Endothelial cell of umbilical vein (primary cell): ENCODE measurements at regions of chr9 and their contacts with region 1.

Region 1: GRCh38 chr9:99266255-99267023 is 44.4 kb downstream of the SEC61B start:
- DNase-seq: peak; percentile 75
- H3K4me3 ChIP-seq: no peak overlapping the region
- H3K27ac ChIP-seq: no peak overlapping the region
- H3K4me1 ChIP-seq: peaks cover 20% of the 10 kb centered on the region
- H3K27me3 ChIP-seq: no peaks in the 10 kb centered on the region
- CTCF ChIP-seq: peak; percentile 89 to 91
- POLR2A ChIP-seq: no peak

Region 2: GRCh38 chr9:99162759-99163364 is 103.6 kb before region 1 on chr9:
- CTCF ChIA-PET with region 1: no interaction called
- POLR2A ChIA-PET with region 1: no interaction called
- dilution Hi-C with region 1: no loop called
- intact Hi-C with region 1: loop called (anchors 2 kb)
- DNase-seq: peak; percentile 62
- H3K4me3 ChIP-seq: no peak overlapping the region
- H3K27ac ChIP-seq: no peak overlapping the region
- H3K4me1 ChIP-seq: peaks cover 3% of the 10 kb centered on the region
- H3K27me3 ChIP-seq: peaks cover 2 to 7% of the 10 kb centered on the region in 2 experiments
- CTCF ChIP-seq: peak; percentile 43 to 44
- POLR2A ChIP-seq: no peak

Region 3: DNA sequence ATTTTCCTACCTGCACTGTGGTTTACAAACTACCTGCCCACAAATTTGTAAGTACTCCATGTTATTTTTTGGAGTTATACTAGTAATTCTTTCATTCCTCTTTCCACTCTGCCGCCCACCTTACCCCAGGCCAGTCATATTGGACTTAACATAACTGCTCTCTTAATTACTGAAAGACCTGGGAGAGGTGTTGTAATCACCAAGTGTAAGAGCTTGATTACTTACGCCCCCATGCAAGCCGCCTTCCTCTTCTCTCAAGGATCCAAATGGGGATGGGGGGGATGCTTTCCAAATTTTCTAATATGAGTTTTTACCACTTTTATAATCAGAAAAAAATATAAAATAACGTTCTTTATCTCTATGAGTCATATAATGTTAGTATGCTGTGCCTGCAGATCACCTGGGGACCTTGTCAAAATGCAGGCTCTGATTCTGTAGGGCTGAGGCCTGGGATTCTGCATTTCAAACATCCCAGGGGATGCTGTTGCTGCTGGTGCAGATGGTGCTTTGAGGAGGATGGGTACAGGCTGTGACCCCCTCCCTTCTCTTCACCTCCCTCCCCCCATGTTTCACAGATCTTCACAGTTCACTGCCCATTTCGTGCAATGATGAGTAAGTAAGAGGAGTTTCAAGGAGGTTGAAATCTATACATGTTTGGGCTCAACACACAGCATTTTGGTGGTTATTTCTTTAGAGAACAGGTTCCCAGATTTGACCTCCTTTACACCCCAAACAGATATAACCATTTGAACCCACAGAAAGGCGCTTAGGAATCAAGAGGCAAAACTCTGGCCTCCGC is 42.9 kb after region 1 on chr9:
- CTCF ChIA-PET with region 1: no interaction called
- POLR2A ChIA-PET with region 1: no interaction called
- dilution Hi-C with region 1: no loop called
- intact Hi-C with region 1: no loop called
- DNase-seq: no peak
- H3K4me3 ChIP-seq: no peak overlapping the region
- H3K27ac ChIP-seq: no peak overlapping the region
- H3K4me1 ChIP-seq: no peaks in the 10 kb centered on the region
- H3K27me3 ChIP-seq: peaks cover 0 to 2% of the 10 kb centered on the region in 2 experiments
- CTCF ChIP-seq: no peak
- POLR2A ChIP-seq: no peak

Region 4: DNA sequence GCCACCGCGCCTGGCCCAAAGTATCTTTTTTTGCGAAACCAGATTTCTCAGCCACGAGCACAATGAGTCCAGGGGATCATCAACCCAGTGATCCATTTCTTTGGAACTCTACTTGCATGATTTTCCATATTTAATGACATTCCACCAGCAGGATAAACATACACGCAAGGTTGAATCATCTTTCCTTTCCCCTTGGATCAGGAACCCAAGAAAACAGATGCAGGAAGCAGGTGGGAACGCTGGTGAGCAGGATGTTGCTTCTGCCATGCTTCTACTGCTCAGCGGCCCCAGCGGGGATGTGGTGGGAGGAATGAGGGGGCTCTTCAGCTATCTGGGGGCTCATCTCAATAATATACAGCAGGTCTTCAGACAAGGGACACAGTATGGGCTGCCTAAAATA is 73.8 kb after region 1 on chr9:
- CTCF ChIA-PET with region 1: no interaction called
- POLR2A ChIA-PET with region 1: no interaction called
- dilution Hi-C with region 1: no loop called
- intact Hi-C with region 1: loop called (anchors 2 kb)
- DNase-seq: peak; percentile 83
- H3K4me3 ChIP-seq: no peak overlapping the region
- H3K27ac ChIP-seq: peak overlapping the region; percentile 93
- H3K4me1 ChIP-seq: peaks cover 27% of the 10 kb centered on the region
- H3K27me3 ChIP-seq: no peaks in the 10 kb centered on the region
- CTCF ChIP-seq: no peak
- POLR2A ChIP-seq: peak; percentile 40

Region 5: DNA sequence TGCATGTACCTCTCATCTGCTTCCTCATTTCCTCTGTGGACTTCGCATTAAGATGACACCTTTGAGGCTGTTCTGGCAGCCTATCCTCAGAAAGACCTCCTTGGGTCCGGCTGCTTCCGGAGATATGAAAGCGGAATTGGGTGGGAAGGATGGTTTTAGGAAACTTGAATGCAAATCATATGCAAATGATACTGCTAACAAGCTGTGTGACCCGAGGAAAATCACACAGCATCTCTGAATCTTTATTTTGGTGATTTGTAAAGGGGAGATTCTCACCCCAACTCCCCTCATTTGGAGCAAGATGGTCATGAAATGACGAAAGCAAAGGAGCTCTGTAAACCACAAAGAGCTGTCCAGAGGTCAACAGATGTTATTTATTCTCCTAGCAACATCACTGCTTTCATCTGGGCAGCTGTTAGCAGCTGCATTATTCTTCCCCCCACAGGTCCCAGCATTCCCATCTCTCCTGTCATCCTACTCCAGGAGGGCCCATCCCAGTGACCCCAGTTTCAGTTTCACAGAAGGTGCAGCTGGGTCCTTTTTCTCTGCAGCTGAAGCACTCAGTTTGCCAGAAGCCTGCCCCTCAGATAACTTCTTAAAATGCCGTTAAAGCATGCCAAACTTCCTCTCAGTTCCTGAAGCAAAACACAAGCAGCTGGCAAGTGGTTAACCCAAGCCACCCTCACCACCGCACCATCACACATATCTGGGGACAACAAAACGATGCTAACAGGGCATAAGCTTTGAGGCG is 225.1 kb after region 1 on chr9:
- CTCF ChIA-PET with region 1: no interaction called
- POLR2A ChIA-PET with region 1: no interaction called
- dilution Hi-C with region 1: no loop called
- intact Hi-C with region 1: no loop called
- DNase-seq: no peak
- H3K4me3 ChIP-seq: no peak overlapping the region
- H3K27ac ChIP-seq: no peak overlapping the region
- H3K4me1 ChIP-seq: no peaks in the 10 kb centered on the region
- H3K27me3 ChIP-seq: no peaks in the 10 kb centered on the region
- CTCF ChIP-seq: no peak
- POLR2A ChIP-seq: no peak

Region 6: GRCh38 chr9:99807276-99807852 is 540.9 kb after region 1 on chr9:
- CTCF ChIA-PET with region 1: no interaction called
- POLR2A ChIA-PET with region 1: no interaction called
- dilution Hi-C with region 1: no loop called
- intact Hi-C with region 1: loop called (anchors 1 kb)
- DNase-seq: peak; percentile 61
- H3K4me3 ChIP-seq: no peak overlapping the region
- H3K27ac ChIP-seq: no peak overlapping the region
- H3K4me1 ChIP-seq: no peaks in the 10 kb centered on the region
- H3K27me3 ChIP-seq: no peaks in the 10 kb centered on the region
- CTCF ChIP-seq: peak; percentile 70 to 72
- POLR2A ChIP-seq: no peak

Region 7: GRCh38 chr9:99906403-99907207 is 640.2 kb after region 1 on chr9 and contains the start of gene STX17:
- CTCF ChIA-PET with region 1: no interaction called
- POLR2A ChIA-PET with region 1: no interaction called
- dilution Hi-C with region 1: no loop called
- intact Hi-C with region 1: loop called (anchors 5 kb)
- DNase-seq: peak; percentile 77
- H3K4me3 ChIP-seq: peak within 1 kb of the TSS; percentile 68 to 90 (median 70)
- H3K27ac ChIP-seq: peak within 1 kb of the TSS; percentile 86
- H3K4me1 ChIP-seq: peaks cover 3% of the 10 kb centered on the region
- H3K27me3 ChIP-seq: no peaks in the 10 kb centered on the region
- CTCF ChIP-seq: no peak
- POLR2A ChIP-seq: peak; percentile 67
- total RNA-seq, gene STX17: 14.8 and 17.6 TPM in 2 replicates

Region 8: GRCh38 chr9:100216178-100216787 is 949.8 kb after region 1 on chr9:
- CTCF ChIA-PET with region 1: no interaction called
- POLR2A ChIA-PET with region 1: no interaction called
- dilution Hi-C with region 1: no loop called
- intact Hi-C with region 1: loop called (anchors 5 kb)
- DNase-seq: peak; percentile 61
- H3K4me3 ChIP-seq: no peak overlapping the region
- H3K27ac ChIP-seq: no peak overlapping the region
- H3K4me1 ChIP-seq: no peaks in the 10 kb centered on the region
- H3K27me3 ChIP-seq: no peaks in the 10 kb centered on the region
- CTCF ChIP-seq: peak; percentile 72 to 76
- POLR2A ChIP-seq: no peak